Dendritic cell treated with granulocyte-macrophage colony-stimulating factor and Interleukin-4, amounts not matched to agents 40 ng/mL and 50 ng/mL, for 4 days (primary cell): ENCODE measurements at regions of chr3 and their contacts with region 1.

Region 1: DNA sequence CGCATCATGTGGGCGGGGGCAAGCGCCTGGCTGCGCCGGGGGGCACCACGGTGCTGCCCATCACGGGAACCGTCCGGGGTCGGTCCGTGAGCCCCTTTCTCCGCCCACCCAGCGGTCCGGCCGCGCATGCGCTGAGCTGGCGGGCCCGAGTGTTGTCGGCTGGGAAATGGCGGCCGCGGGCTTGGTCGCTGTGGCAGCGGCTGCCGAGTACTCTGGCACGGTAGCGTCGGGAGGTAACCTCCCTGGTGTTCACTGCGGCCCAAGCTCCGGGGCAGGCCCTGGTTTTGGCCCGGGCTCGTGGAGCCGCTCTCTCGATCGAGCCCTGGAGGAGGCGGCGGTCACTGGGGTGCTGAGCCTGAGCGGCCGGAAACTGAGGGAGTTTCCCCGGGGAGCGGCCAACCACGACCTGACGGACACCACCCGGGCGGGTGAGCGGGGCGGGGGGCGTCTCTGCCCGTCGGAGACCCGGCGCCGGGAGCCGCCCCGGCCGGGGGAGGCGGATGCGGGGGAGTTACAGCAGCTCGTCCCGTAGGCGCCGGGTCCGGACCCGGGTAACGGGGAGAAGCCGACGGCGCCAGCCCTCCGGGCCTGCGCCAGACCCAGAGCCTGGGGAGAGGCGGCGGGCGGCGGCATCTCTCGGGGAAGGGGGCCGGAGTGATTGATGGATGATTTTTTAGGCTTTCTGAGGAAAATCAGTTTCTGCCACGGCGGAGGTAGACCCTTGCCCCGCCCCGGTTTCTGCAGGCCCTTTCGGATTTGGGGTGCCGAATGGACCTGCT is at the start of gene LRCH3:
- H3K4me3 Mint-ChIP-seq: peak within 1 kb of the TSS; percentile 98
- H3K27ac Mint-ChIP-seq: peak within 1 kb of the TSS; percentile 94
- H3K4me1 Mint-ChIP-seq: peaks cover 34% of the 10 kb centered on the region
- H3K27me3 Mint-ChIP-seq: no peaks in the 10 kb centered on the region

Region 2: DNA sequence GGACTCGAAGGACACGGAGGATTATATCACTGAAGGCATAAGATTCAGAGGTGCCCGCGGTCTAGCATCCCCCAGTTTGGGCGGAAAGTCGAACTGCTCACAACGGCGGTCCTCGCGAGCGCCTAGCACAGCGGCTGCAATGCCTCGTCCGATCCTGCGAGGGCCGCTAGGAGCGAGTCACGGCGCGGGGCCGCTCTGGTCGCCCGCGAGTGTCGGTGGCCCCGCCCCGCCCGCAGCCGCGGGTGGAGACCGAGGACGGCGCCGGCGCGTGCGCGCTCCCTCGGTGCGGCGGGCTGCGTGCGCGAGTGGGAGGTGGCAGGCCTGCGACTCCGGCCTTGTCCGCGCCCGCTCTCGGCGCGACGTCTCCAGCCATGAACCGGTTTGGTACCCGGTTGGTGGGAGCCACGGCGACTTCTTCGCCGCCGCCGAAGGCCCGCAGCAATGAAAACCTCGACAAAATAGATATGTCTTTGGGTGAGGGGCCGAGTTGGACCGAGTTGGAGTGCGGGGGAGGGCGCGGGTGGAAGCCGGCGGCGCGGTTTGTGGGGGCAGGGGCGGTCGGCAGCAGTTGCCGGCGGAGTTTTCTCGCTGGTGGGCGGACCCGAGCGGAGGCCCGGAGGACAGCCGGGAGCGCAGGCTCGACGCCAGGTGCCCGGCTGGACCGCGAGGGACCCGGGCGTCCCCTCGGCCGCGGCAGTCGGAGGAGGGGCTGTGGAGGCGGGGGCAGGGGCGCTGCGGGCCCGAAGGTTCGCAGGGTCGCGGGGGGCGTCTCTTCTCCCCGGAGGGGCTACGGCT is 41.5 kb before region 1 on chr3 and contains the start of gene FYTTD1:
- intact Hi-C with region 1: loop called (anchors 5 kb)
- H3K4me3 Mint-ChIP-seq: peak within 1 kb of the TSS; percentile 99
- H3K27ac Mint-ChIP-seq: peak within 1 kb of the TSS; percentile 93
- H3K4me1 Mint-ChIP-seq: peaks cover 50% of the 10 kb centered on the region
- H3K27me3 Mint-ChIP-seq: peaks cover 14% of the 10 kb centered on the region